ENCODE measurements at regions of chr20 and their contacts with region 1.

Region 1: DNA sequence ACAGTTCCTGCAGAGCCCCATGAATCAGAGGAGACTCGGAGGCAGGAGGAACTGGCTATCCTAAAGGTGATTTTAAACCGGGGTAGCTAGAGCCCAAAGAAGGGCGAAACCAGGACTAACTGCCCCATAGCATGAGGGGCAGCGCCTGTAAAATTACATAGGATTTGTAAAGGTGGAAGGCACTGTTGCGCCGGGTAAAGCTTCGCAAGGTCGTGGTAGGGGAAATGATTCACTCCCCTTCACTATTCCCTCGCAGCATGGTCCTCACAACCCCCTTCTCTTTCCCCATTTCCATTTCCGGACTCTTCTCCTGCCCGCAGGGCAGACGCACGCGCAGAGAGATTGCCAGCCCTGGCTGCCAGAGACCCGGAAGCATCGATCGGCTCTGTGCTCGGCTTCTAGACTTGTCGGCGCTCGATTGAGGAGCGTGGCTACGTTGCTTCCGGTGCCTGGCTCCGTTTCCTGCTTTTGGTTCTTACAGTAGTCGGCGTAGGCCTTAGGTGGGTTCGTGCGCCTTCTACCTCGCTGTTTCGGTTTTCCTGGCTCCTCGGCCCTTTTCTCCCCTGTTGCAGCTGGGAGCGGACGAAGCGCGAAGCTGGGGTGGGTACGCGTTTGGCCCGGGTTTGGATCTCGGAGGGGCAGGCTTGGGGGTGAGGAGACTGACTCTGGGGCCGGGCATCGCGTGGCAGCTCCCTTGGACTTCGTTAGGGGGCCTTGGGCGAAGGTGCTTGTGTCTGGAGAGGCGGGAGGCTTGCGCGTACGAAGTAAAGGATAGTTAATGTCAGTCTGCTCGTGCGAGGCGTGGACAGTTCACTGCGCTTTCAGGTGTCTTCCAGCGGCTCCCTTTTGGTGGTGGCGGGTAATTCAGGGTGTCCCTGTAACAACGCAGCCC is at the start of gene SNRPB2:
- DNase-seq: peak; percentile 94 to 99 (median 97)
- H3K4me3 ChIP-seq: peak within 1 kb of the TSS; percentile 84 to 92 (median 90)
- H3K4me3 Mint-ChIP-seq: peak within 1 kb of the TSS; percentile 98 to 100
- H3K27ac ChIP-seq: peak within 1 kb of the TSS; percentile 83 to 98
- H3K27ac Mint-ChIP-seq: peak within 1 kb of the TSS; percentile 99 to 100 (median 100)
- H3K4me1 ChIP-seq: peaks cover 13 to 25% of the 10 kb centered on the region in 2 donors
- H3K4me1 Mint-ChIP-seq: peaks cover 34% of the 10 kb centered on the region
- H3K27me3 ChIP-seq: peaks cover 21 to 34% of the 10 kb centered on the region in 2 donors
- H3K27me3 Mint-ChIP-seq: peaks cover 18 to 32% (median 25%) of the 10 kb centered on the region in 3 donors
- CTCF ChIP-seq: no peak
- polyA plus RNA-seq, gene SNRPB2: 25.2 to 66.3 (median 62.3) TPM

Region 2: DNA sequence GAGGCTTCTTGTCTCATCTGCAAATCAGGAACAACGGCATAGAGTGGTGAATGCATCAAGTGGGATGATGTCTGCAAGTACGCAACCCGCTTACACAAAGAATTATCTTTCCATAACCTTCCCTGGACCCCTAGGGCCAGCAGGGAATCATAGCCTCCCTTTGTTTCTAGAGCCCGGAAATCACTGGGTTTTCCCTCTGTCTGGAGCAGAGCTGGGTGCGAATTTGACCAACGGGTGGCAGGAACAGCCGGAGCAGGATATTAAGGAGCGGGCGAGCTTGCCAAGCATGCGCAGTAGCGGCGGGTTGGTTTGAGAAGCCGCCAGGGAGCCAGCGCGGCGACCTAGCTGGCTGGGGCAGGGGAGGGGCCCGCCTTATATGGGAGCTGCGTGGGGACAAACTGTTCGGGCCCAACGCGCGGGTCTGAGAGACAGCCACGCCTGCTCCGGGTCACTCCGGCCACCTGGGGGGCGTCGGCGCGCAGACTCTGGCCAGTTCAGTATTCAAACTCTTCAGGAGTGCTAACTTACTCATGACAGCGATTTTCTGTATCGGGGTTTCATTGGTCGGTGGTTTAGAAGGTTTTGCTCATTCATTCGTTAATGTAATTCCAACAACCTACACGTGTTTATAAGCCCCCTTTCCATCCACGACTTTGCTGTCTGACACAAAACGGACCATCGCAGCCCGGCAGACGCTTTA is 155.0 kb before region 1 on chr20:
- intact Hi-C with region 1: loop called in 1 of 2 experiments (anchors 2 kb)
- DNase-seq: peak; percentile 55 to 72 (median 68)
- H3K4me3 ChIP-seq: peak overlapping the region; percentile 51 to 77 (median 61)
- H3K4me3 Mint-ChIP-seq: peak overlapping the region; percentile 86 to 94
- H3K27ac ChIP-seq: no peak overlapping the region
- H3K27ac Mint-ChIP-seq: peak overlapping the region in 6 of 7 donors; percentile 36 to 79 (median 63)
- H3K4me1 ChIP-seq: peaks cover 24 to 31% of the 10 kb centered on the region in 2 donors
- H3K4me1 Mint-ChIP-seq: peaks cover 36% of the 10 kb centered on the region
- H3K27me3 ChIP-seq: no peaks in the 10 kb centered on the region
- H3K27me3 Mint-ChIP-seq: peaks cover 0 to 4% (median 0%) of the 10 kb centered on the region in 3 donors
- CTCF ChIP-seq: no peak

Region 3: DNA sequence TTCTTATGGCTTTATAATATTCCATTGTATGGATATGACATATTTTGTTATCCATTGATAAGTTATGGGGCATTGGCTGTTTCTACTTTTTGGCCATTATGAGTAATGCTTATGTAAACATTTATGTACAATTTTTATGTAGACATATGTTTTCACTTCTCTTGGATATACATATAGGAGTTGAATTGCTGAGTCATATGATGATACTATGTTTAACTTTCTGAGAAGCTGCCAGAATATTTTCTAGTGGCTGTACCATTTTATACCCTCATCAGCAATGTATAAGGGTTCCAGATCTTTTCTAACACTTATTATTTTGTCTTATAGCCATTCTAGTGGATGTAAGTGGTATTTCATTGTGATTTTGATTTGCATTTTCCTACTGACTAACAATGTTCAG is 41.4 kb after region 1 on chr20:
- intact Hi-C with region 1: no loop called
- DNase-seq: no peak
- H3K4me3 ChIP-seq: no peak overlapping the region
- H3K4me3 Mint-ChIP-seq: no peak overlapping the region
- H3K27ac ChIP-seq: no peak overlapping the region
- H3K27ac Mint-ChIP-seq: no peak overlapping the region
- H3K4me1 ChIP-seq: no peaks in the 10 kb centered on the region
- H3K4me1 Mint-ChIP-seq: no peaks in the 10 kb centered on the region
- H3K27me3 ChIP-seq: peaks cover 0 to 2% of the 10 kb centered on the region in 2 donors
- H3K27me3 Mint-ChIP-seq: peaks cover 3 to 4% (median 4%) of the 10 kb centered on the region in 3 donors
- CTCF ChIP-seq: no peak

Region 4: DNA sequence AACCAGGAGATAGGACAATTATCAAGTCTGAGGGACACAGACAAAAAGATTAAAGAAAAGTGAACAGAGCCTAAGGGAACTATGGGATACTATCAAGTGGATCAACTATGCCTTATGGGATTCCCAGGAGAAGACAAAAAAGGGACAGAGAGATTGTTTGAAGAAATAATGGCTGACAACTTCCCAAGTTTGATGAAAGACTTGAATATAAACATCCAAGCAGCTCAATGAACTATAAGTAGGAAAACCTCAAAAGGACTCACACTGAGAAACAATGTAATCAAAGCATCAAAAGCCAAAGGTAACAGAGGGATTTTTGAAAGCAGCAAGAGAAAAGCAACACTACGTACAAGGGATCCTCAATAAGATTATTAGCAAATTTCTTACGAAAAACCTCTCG is 1569.6 kb after region 1 on chr20:
- intact Hi-C with region 1: loop called in 1 of 2 experiments (anchors 10 kb)
- DNase-seq: no peak
- H3K4me3 ChIP-seq: no peak overlapping the region
- H3K4me3 Mint-ChIP-seq: no peak overlapping the region
- H3K27ac ChIP-seq: no peak overlapping the region
- H3K27ac Mint-ChIP-seq: no peak overlapping the region
- H3K4me1 ChIP-seq: no peaks in the 10 kb centered on the region
- H3K4me1 Mint-ChIP-seq: peaks cover 5% of the 10 kb centered on the region
- H3K27me3 ChIP-seq: no peaks in the 10 kb centered on the region
- H3K27me3 Mint-ChIP-seq: no peaks in the 10 kb centered on the region
- CTCF ChIP-seq: no peak

Measured in CD14-positive monocyte (primary cell).